OCI-LY7 (cell line): ENCODE measurements at regions of chr4 and their contacts with region 1.

Region 1: DNA sequence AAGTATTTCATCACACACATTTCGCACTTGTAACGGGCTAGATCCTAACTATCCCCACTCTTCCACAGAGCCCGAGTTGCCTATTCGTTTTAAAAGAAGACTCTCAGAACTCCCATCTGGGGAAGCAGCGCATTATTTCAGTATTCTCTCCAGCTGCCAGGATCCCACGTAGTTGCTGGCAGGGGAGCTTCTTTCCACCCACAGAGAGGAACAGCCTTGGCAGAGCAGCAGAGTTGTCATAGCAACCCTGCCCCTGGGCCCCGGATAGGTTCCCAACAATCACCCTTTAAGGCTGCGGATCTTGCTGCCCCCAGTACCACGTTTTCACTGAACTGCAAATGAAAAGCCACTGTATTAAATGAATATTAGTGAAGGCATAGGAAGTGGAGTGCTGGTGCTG is 106.7 kb downstream of the GPM6A start:
- DNase-seq: no peak
- H3K4me3 ChIP-seq: no peak overlapping the region
- H3K27ac ChIP-seq: no peak overlapping the region
- H3K4me1 ChIP-seq: no peaks in the 10 kb centered on the region
- CTCF ChIP-seq: no peak

Region 2: DNA sequence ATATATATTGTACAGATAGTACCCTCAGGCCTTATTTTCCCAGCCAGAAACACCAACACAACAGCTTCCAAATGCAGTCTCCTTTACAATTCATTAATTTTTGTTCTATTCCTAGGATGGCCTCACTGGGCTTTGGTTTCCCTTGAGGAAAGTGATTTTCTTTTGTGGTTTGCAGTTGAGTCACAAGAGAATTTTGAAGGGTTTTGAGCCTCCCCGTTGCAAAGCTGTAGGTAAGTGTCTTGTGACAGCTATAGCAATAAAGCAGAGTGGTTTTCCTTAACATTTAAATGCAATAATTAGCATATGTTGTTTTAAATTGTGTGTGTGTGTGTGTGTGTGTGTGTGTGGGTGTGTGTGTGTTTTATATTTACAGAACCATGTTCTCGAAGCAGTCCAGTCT is 306.1 kb after region 1 on chr4:
- CTCF ChIA-PET with region 1: no interaction called
- POLR2A ChIA-PET with region 1: no interaction called
- intact Hi-C with region 1: no loop called
- DNase-seq: no peak
- H3K4me3 ChIP-seq: no peak overlapping the region
- H3K27ac ChIP-seq: no peak overlapping the region
- H3K4me1 ChIP-seq: peaks cover 52% of the 10 kb centered on the region
- CTCF ChIP-seq: no peak

Region 3: GRCh38 chr4:176102414-176103063 is 397.1 kb after region 1 on chr4:
- CTCF ChIA-PET with region 1: no interaction called
- POLR2A ChIA-PET with region 1: interaction called, 10 read pairs
- intact Hi-C with region 1: no loop called
- DNase-seq: no peak
- H3K4me3 ChIP-seq: no peak overlapping the region
- H3K27ac ChIP-seq: no peak overlapping the region
- H3K4me1 ChIP-seq: no peaks in the 10 kb centered on the region
- CTCF ChIP-seq: no peak